SK-N-SH (cell line): ENCODE measurements at regions of chr1 and their contacts with region 1.

Region 1: DNA sequence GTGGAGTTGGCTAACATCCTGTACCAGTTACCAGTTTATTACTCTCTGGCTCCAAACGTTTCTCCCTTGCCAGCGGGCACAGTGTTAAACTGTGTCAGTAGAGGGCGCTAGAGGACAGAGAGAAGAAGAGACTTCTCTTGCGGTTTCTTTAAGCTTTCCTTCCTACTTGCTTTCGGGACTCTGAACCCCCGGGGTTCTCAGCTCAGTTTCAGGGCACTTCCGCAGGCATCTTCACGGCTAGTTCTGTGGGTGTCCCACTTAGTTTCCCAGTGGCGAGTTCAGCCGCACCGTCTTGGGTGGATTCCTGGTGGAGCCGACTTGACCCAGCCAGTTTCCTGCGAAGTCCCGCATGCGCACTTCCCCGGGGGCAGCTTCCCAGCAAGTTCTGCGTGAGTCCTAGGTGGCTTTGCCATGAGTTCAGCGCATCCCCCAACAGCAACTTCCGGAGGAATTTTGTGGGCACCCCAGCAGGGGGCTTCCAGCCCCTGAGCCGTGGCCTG is 37.9 kb upstream of the BTG2 start:
- DNase-seq: peak; percentile 80
- H3K4me3 ChIP-seq: peak overlapping the region; percentile 65
- H3K27ac ChIP-seq: peak overlapping the region in 1 of 2 experiments; percentile 75; a peak in 1 of 4 replicates
- H3K4me1 ChIP-seq: peaks cover 0 to 15% of the 10 kb centered on the region in 2 experiments; a peak in 1 of 4 replicates
- H3K27me3 ChIP-seq: no peaks in the 10 kb centered on the region; the same call in 1 of the 2 replicates
- CTCF ChIP-seq: peak; percentile 95
- EP300 ChIP-seq: no peak
- RAD21 ChIP-seq: peak; percentile 79

Region 2: GRCh38 chr1:203026031-203026989 is 241.1 kb before region 1 on chr1 and contains the start of gene PPFIA4:
- CTCF ChIA-PET with region 1: interaction called, 68 read pairs
- POLR2A ChIA-PET with region 1: no interaction called
- DNase-seq: peak; percentile 99
- H3K4me3 ChIP-seq: peak within 1 kb of the TSS; percentile 70 to 74
- H3K27ac ChIP-seq: peak within 1 kb of the TSS in 1 of 2 experiments; percentile 58; a peak in 1 of 4 replicates
- H3K4me1 ChIP-seq: peaks cover 0 to 34% of the 10 kb centered on the region in 2 experiments; a peak in 1 of 4 replicates
- H3K27me3 ChIP-seq: no peaks in the 10 kb centered on the region
- CTCF ChIP-seq: no peak
- EP300 ChIP-seq: 0 out of 4 replicates have a peak, but pooled peaks of 1 of the 2 experiments have one; percentile 16
- RAD21 ChIP-seq: peak; percentile 45
- polyA plus RNA-seq, gene PPFIA4: 4.4 and 5.5 TPM in 2 replicates

Region 3: GRCh38 chr1:203127666-203128430 is 139.5 kb before region 1 on chr1 and contains the start of gene ADORA1:
- CTCF ChIA-PET with region 1: interaction called, 80 read pairs
- POLR2A ChIA-PET with region 1: no interaction called
- DNase-seq: peak; percentile 80
- H3K4me3 ChIP-seq: peak within 1 kb of the TSS; percentile 48 to 55
- H3K27ac ChIP-seq: no peak within 1 kb of the TSS
- H3K4me1 ChIP-seq: peaks cover 21 to 69% of the 10 kb centered on the region in 2 experiments
- H3K27me3 ChIP-seq: no peaks in the 10 kb centered on the region; the same call in 1 of the 2 replicates
- CTCF ChIP-seq: peak; percentile 28; the same call in 1 of the 2 replicates
- EP300 ChIP-seq: no peak
- RAD21 ChIP-seq: no peak
- polyA plus RNA-seq, gene ADORA1: 3.2 and 4.8 TPM in 2 replicates

Region 4: DNA sequence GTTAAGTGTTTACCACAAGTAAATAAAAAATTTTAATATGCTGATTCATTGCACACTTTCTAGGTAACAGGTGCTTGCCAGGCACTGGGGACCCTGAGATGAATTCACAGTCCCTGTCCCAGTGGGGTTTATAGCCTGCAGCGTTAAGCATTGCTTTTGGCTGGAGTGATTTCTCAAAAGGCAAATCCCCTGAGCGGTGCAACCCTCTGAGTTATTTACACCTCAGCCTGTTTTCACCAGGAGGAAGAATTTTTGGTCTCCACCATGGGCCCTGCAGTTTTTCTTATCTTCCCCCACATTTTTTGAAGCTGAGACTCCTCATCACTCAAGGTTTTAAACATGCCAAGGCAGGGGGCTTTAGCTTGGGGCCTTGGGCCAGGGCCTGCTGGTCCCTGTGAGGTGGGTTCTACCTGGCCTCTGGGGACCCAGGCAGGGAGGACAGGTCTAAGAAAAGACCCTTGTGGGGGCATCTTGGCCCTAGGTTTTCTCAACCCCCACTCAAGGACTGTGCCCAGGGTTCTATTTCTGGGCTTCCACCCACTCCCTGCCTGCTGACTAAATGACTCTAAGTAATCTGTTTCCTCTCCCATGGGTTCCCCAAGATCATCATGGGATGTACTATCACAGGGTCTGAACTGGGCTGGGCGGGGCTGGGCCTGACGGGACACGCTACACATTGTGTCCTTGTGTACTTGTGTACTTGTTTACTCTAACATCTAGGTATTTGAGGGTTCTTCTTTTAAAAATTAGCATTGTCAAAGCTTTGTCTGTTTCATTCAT is 27.7 kb before region 1 on chr1:
- CTCF ChIA-PET with region 1: interaction called, 10 read pairs
- POLR2A ChIA-PET with region 1: no interaction called
- DNase-seq: no peak
- H3K4me3 ChIP-seq: no peak overlapping the region
- H3K27ac ChIP-seq: no peak overlapping the region
- H3K4me1 ChIP-seq: no peaks in the 10 kb centered on the region
- H3K27me3 ChIP-seq: no peaks in the 10 kb centered on the region; the same call in 1 of the 2 replicates
- CTCF ChIP-seq: no peak
- EP300 ChIP-seq: no peak
- RAD21 ChIP-seq: no peak

Region 5: GRCh38 chr1:203299169-203299568 is 31.8 kb after region 1 on chr1:
- CTCF ChIA-PET with region 1: interaction called, 21 read pairs
- POLR2A ChIA-PET with region 1: no interaction called
- DNase-seq: no peak
- H3K4me3 ChIP-seq: no peak overlapping the region
- H3K27ac ChIP-seq: no peak overlapping the region
- H3K4me1 ChIP-seq: peaks cover 0 to 19% of the 10 kb centered on the region in 2 experiments; a peak in 3 of 4 replicates
- H3K27me3 ChIP-seq: peaks cover 9% of the 10 kb centered on the region; the same call in 1 of the 2 replicates
- CTCF ChIP-seq: no peak
- EP300 ChIP-seq: no peak
- RAD21 ChIP-seq: no peak

Region 6: DNA sequence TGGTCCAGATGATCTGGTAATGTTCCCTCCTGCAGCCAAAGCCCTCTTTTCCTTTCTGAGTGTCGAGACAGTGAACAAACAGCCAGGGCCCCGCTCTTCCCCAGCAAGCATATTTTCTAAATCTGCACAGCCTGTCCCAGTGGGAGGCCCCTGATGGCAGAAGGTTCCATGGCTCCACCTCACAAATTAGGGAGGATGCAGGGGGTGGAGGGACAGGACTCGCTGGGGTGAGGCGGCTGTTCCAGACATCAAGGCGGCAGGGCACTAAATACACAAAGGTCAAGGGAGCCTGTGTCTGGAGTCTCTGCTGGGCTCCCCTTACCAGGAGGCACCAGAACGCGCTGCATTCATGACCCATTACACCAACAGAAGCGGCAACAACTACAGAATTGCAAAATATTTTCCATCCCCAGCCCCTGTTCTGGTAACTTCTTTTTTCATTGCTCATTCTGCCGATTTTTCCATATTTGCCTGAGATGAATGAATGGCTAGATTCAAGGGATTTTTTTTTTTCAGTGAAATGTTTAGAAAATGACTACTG is 181.2 kb after region 1 on chr1:
- CTCF ChIA-PET with region 1: interaction called, 17 read pairs
- POLR2A ChIA-PET with region 1: no interaction called
- DNase-seq: no peak
- H3K4me3 ChIP-seq: no peak overlapping the region
- H3K27ac ChIP-seq: no peak overlapping the region
- H3K4me1 ChIP-seq: peaks cover 0 to 6% of the 10 kb centered on the region in 2 experiments; a peak in 3 of 4 replicates
- H3K27me3 ChIP-seq: peaks cover 8% of the 10 kb centered on the region; the same call in 1 of the 2 replicates
- CTCF ChIP-seq: no peak
- EP300 ChIP-seq: no peak
- RAD21 ChIP-seq: no peak

Region 7: DNA sequence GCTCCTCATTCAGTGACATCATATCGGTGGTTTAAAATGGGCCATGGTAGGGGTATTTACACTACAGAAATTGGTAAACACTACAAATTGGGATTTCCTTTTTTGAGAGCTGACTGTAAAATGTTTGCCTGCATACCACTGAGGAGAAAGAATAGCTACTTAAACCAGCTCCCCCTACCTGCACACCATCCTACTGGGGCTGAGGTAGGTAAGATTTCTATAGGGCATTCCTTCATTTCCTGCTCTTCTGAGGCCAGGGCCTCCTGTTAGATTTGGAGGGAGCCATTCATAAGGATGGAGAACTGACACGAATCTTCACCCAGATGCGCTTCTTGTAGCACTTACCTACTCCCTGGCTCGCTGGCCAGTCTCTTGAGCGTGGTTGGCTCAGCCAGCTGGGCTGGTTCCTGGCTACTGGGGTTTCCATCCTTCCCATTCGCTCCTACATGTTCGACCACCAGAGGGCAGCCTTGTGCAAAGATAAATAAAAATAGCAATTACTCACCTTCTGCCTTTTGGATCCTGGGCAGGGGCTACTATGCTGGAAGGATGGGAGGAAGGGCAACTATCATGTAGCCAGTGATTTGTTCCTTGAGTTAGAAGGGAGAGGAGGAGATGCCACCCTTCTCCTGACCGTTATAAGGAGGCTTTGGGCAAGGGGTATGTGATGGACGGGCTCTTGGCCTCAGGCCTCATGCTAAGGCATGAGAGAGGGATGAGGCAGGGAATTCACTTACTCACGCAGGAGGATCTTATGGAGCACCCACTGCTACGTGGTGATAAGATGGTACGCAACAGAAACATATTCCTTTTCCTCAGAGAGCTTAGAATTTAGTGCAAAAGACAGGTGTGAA is 237.2 kb after region 1 on chr1:
- CTCF ChIA-PET with region 1: interaction called, 13 read pairs
- POLR2A ChIA-PET with region 1: no interaction called
- DNase-seq: peak; percentile 86
- H3K4me3 ChIP-seq: no peak overlapping the region; a peak in 1 of 4 replicates
- H3K27ac ChIP-seq: peak overlapping the region in 1 of 2 experiments; percentile 37; a peak in 1 of 4 replicates
- H3K4me1 ChIP-seq: peaks cover 25 to 30% of the 10 kb centered on the region in 2 experiments
- H3K27me3 ChIP-seq: no peaks in the 10 kb centered on the region
- CTCF ChIP-seq: peak; percentile 87
- EP300 ChIP-seq: no peak
- RAD21 ChIP-seq: peak; percentile 92

Region 8: DNA sequence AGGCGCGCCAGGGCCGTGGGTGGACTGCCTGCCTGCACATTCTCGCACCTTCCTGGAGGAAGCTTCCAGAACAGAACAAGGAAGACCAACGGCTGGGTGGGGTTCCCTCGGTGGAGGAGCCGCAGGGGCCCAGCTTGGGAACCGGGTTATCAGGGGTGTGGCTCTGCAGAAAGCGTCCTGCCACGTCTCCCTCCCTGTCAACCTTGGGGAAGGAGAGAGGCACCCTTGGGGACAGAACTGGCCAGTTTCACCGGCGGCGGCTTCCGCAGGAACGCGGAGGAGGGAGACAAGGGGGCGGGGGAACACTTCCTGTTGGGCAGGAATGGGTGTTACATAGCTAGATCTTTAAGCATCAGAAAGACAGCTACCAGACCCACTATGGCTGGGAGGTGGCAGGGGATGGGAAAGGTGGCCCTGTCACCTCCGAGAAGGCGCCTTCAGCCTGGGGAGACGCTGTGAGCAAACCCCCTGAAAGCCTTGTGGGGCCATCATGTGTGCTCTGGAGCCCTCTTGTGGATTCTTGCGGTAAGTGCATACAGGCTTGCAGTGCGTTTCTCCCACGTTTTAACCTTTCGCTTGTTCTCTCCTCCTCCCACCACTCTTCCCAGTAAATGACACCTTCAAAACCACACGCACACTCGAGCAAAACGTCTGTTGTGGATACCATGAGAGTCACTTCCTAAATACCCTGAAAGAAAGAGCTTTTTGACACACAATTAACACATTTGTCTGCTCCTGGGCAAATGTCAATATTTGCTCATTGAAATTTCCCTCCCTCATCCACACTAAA is 1096.1 kb after region 1 on chr1:
- CTCF ChIA-PET with region 1: no interaction called
- POLR2A ChIA-PET with region 1: no interaction called
- DNase-seq: peak; percentile 74
- H3K4me3 ChIP-seq: peak overlapping the region; percentile 41 to 56
- H3K27ac ChIP-seq: peak overlapping the region in 1 of 2 experiments; percentile 56; a peak in 1 of 4 replicates
- H3K4me1 ChIP-seq: peaks cover 4 to 25% of the 10 kb centered on the region in 2 experiments; a peak in 1 of 4 replicates
- H3K27me3 ChIP-seq: peaks cover 7% of the 10 kb centered on the region; the same call in 1 of the 2 replicates
- CTCF ChIP-seq: peak; percentile 98
- EP300 ChIP-seq: no peak
- RAD21 ChIP-seq: peak; percentile 97